ENCODE measurements at regions of chr9 and their contacts with region 1.

Region 1: GRCh38 chr9:74496819-74497747 is at the start of gene RORB:
- DNase-seq: no peak
- ATAC-seq: peak; percentile 95
- H3K4me3 ChIP-seq: peak within 1 kb of the TSS; percentile 73
- H3K27ac ChIP-seq: no peak within 1 kb of the TSS
- H3K4me1 ChIP-seq: no peaks in the 10 kb centered on the region; the same call in 1 of the 2 replicates
- H3K27me3 ChIP-seq: peaks cover 7 to 22% of the 10 kb centered on the region in 2 experiments
- CTCF ChIP-seq: no peak
- EP300 ChIP-seq: no peak
- POLR2A ChIP-seq: peak; percentile 49; the same call in 1 of the 2 replicates
- RAD21 ChIP-seq: no peak
- polyA plus RNA-seq, gene RORB: not detected

Region 2: DNA sequence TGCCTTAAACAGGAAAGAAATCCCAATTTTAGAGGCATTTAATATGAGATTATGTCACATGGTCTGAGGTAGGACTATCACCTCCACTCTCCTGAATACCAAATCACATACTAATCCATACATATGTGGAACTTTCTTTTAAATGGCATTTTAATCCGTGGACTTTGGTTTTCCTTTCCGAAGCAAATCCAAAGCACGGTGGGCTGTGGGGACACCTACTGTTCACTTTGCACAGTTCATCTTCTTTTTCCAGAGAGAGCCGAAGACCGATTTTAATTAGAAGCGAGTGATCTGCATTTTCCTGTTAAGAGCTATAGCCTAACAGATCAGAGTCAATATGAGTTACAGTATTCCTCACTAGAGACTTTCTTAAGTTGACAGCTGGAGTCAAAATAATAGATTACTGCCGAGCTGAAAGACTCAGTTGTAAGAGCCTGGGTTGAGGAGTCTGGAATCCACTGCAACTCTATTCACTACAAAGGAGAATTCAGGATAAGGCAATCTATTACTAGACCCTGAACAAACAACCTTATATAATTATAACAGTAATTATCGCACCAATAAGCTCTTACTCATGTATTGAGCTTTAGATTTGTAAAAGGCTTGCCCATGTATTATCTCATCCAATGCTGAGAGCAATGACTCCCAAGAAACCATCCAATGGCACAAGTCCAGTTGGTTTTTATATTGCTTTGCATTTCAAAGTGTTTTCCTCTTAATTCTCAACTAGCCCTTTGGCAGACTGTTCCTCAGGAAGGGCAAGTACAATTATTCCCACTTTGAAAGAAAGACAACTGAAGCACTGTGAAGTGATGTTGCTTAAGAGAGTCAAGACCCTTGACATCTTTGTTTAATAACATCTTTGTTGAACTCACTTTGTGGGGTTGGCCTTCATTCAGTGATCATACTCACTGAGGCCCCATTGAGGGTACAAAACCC is 246.0 kb after region 1 on chr9:
- CTCF ChIA-PET with region 1: no interaction called
- POLR2A ChIA-PET with region 1: no interaction called
- RAD21 ChIA-PET with region 1: no interaction called
- SMC1A ChIA-PET with region 1: no interaction called
- in situ Hi-C with region 1: no loop called
- intact Hi-C with region 1: loop called (anchors 10 kb)
- DNase-seq: no peak
- ATAC-seq: peak; percentile 59
- H3K4me3 ChIP-seq: no peak overlapping the region
- H3K27ac ChIP-seq: no peak overlapping the region
- H3K4me1 ChIP-seq: no peaks in the 10 kb centered on the region
- H3K27me3 ChIP-seq: peaks cover 0 to 7% of the 10 kb centered on the region in 2 experiments; a peak in 2 of 4 replicates
- CTCF ChIP-seq: peak; percentile 56 to 66 (median 62)
- EP300 ChIP-seq: no peak
- POLR2A ChIP-seq: no peak
- RAD21 ChIP-seq: peak; percentile 54

Measured in GM12878 (cell line).